Activated CD4-positive, alpha-beta T cell treated with anti-CD3 and anti-CD28 coated beads for 36 hours (primary cell): ENCODE measurements at regions of chr11 and their contacts with region 1.

Region 1: DNA sequence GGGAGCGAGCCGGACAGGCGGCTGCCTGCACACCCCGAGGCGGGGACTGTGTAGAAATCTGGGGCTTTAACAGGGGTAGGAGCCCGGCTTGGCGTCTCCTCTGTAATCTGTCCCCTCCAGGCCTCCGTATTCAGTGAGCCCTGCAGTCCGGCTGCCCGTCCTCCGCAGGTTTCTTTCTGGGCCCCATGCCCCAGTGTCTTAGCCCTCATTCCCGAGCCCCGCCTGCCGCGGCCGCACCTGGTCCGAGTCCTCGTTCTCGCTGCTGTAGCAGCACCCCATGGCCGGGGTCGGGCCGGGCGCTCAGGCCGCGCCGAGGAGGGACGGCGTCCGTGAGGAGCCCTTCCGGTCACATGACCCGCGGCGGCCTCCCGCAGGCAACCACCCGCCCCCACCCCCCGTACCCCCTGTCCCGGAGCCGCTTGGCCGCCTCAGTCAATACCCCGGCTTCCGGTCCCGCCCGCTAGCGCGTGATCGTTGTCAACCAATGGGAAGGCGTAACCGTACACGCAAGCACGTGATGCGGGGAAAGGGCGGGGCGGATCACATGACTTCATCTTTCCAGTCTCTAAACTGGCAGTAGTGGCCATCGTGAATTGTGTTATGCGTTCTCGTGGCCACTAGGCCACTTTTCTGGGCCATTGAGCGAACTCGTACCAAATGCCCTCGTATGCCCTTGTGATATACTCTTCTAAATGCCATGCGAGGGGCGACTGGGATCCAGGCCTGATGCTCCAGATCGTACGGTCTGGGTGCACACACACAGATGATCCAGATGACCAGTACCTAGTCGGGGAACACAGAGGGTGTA is at the start of gene LAMTOR1:
- DNase-seq: peak; percentile 99
- ATAC-seq: peak; percentile 98
- H3K4me3 Mint-ChIP-seq: peak within 1 kb of the TSS; percentile 97
- H3K27ac Mint-ChIP-seq: peak within 1 kb of the TSS; percentile 95
- H3K4me1 Mint-ChIP-seq: peaks cover 38% of the 10 kb centered on the region
- H3K27me3 Mint-ChIP-seq: no peaks in the 10 kb centered on the region
- total RNA-seq, gene LAMTOR1: 50.7 to 52.2 TPM

Region 2: GRCh38 chr11:71787098-71787823 is 315.9 kb before region 1 on chr11:
- CTCF ChIA-PET with region 1: no interaction called
- POLR2A ChIA-PET with region 1: no interaction called
- intact Hi-C with region 1: loop called (anchors 2 kb)
- DNase-seq: peak; percentile 97
- ATAC-seq: peak; percentile 97
- H3K4me3 Mint-ChIP-seq: peak overlapping the region; percentile 84
- H3K27ac Mint-ChIP-seq: peak overlapping the region; percentile 95
- H3K4me1 Mint-ChIP-seq: peaks cover 24% of the 10 kb centered on the region
- H3K27me3 Mint-ChIP-seq: no peaks in the 10 kb centered on the region

Region 3: GRCh38 chr11:71962428-71963038 is 140.6 kb before region 1 on chr11:
- CTCF ChIA-PET with region 1: no interaction called
- POLR2A ChIA-PET with region 1: no interaction called
- intact Hi-C with region 1: no loop called
- DNase-seq: no peak
- ATAC-seq: peak; percentile 92
- H3K4me3 Mint-ChIP-seq: no peak overlapping the region
- H3K27ac Mint-ChIP-seq: peak overlapping the region; percentile 60
- H3K4me1 Mint-ChIP-seq: peaks cover 25% of the 10 kb centered on the region
- H3K27me3 Mint-ChIP-seq: no peaks in the 10 kb centered on the region

Region 4: DNA sequence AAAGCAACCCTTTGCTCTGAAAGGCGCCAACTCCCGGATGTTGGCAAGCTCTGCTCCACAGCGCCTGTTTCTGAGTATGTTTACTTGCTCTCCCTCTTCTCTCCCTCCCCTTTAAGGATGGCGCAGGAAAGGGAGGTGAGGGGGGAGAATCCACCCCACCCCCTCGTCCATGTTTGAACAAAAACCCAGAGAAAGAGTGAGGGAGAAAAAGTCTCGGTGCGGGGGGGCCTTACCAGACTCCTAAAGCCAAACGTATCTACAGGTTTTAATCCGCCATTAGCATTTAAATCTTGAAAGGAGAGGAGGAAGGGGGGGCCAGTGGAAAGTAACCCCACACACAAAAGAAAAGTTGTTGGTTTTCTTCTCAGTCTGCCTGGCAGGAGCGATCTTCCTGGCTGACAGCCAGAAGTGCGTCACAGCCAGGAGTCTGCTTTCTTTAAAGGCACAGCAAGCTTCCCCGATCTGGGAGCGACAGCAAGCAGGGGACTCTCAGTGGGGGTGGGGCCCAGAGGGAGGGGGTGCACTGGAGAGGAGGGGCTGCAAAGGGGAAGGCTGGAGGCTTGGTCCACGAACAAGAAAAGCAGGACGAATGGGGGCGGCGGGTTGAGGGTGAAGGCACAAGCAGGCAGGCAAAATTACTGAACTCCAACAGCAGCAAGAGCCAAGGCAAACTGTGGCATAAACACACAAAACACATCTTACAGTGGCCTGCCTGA is 62.3 kb before region 1 on chr11:
- CTCF ChIA-PET with region 1: no interaction called
- POLR2A ChIA-PET with region 1: no interaction called
- intact Hi-C with region 1: loop called in 1 of 2 experiments (anchors 1 kb)
- DNase-seq: peak; percentile 86
- ATAC-seq: peak; percentile 76
- H3K4me3 Mint-ChIP-seq: no peak overlapping the region
- H3K27ac Mint-ChIP-seq: no peak overlapping the region
- H3K4me1 Mint-ChIP-seq: peaks cover 35% of the 10 kb centered on the region
- H3K27me3 Mint-ChIP-seq: no peaks in the 10 kb centered on the region

Region 5: GRCh38 chr11:72123117-72123653 is 20.0 kb after region 1 on chr11:
- CTCF ChIA-PET with region 1: no interaction called
- POLR2A ChIA-PET with region 1: no interaction called
- intact Hi-C with region 1: no loop called
- DNase-seq: no peak
- ATAC-seq: no peak
- H3K4me3 Mint-ChIP-seq: no peak overlapping the region
- H3K27ac Mint-ChIP-seq: no peak overlapping the region
- H3K4me1 Mint-ChIP-seq: no peaks in the 10 kb centered on the region
- H3K27me3 Mint-ChIP-seq: peaks cover 3% of the 10 kb centered on the region

Region 6: GRCh38 chr11:72179804-72180396 is 76.8 kb after region 1 on chr11:
- CTCF ChIA-PET with region 1: no interaction called
- POLR2A ChIA-PET with region 1: no interaction called
- intact Hi-C with region 1: no loop called
- DNase-seq: peak; percentile 16
- ATAC-seq: peak; percentile 56
- H3K4me3 Mint-ChIP-seq: no peak overlapping the region
- H3K27ac Mint-ChIP-seq: peak overlapping the region; percentile 12
- H3K4me1 Mint-ChIP-seq: peaks cover 12% of the 10 kb centered on the region
- H3K27me3 Mint-ChIP-seq: peaks cover 6% of the 10 kb centered on the region